ENCODE measurements at regions of chr9 and their contacts with region 1.

Region 1: GRCh38 chr9:136700959-136701667 is 11.3 kb upstream of the DIPK1B start:
- DNase-seq: peak; percentile 88
- H3K4me3 Mint-ChIP-seq: peak overlapping the region; percentile 87
- H3K27ac Mint-ChIP-seq: peak overlapping the region; percentile 98
- H3K4me1 Mint-ChIP-seq: peaks cover 17% of the 10 kb centered on the region
- H3K27me3 Mint-ChIP-seq: peaks cover 20% of the 10 kb centered on the region

Region 2: GRCh38 chr9:136631038-136632000 is 69.8 kb before region 1 on chr9:
- intact Hi-C with region 1: no loop called
- DNase-seq: peak; percentile 93
- H3K4me3 Mint-ChIP-seq: no peak overlapping the region
- H3K27ac Mint-ChIP-seq: no peak overlapping the region
- H3K4me1 Mint-ChIP-seq: peaks cover 2% of the 10 kb centered on the region
- H3K27me3 Mint-ChIP-seq: peaks cover 6% of the 10 kb centered on the region

Region 3: GRCh38 chr9:136686794-136687711 is 14.1 kb before region 1 on chr9 and contains the start of gene AGPAT2:
- intact Hi-C with region 1: loop called (anchors 1 kb)
- DNase-seq: peak; percentile 89
- H3K4me3 Mint-ChIP-seq: peak within 1 kb of the TSS; percentile 81
- H3K27ac Mint-ChIP-seq: peak within 1 kb of the TSS; percentile 65
- H3K4me1 Mint-ChIP-seq: peaks cover 4% of the 10 kb centered on the region
- H3K27me3 Mint-ChIP-seq: peaks cover 4% of the 10 kb centered on the region
- total RNA-seq, gene AGPAT2: 25.6 and 25.9 TPM in 2 replicates

Region 4: GRCh38 chr9:136728080-136728547 is 27.0 kb after region 1 on chr9:
- intact Hi-C with region 1: loop called (anchors 1 kb)
- DNase-seq: peak; percentile 98
- H3K4me3 Mint-ChIP-seq: peak overlapping the region; percentile 100
- H3K27ac Mint-ChIP-seq: peak overlapping the region; percentile 45
- H3K4me1 Mint-ChIP-seq: peaks cover 18% of the 10 kb centered on the region
- H3K27me3 Mint-ChIP-seq: peaks cover 3% of the 10 kb centered on the region

Region 5: GRCh38 chr9:137176302-137177182 is 475.4 kb after region 1 on chr9:
- intact Hi-C with region 1: no loop called
- DNase-seq: peak; percentile 72
- H3K4me3 Mint-ChIP-seq: no peak overlapping the region
- H3K27ac Mint-ChIP-seq: no peak overlapping the region
- H3K4me1 Mint-ChIP-seq: no peaks in the 10 kb centered on the region
- H3K27me3 Mint-ChIP-seq: peaks cover 10% of the 10 kb centered on the region

Measured in activated CD4-positive, alpha-beta T cell treated with anti-CD3 and anti-CD28 coated beads, Interleukin-2, amount 10 ng/mL, durations not matched to agents 24 days and 14 days (primary cell).